SK-MEL-5 (cell line): ENCODE measurements at regions of chr1 and their contacts with region 1.

Region 1: GRCh38 chr1:32163405-32163804 is 16.1 kb upstream of the TXLNA start:
- DNase-seq: no peak

Region 2: DNA sequence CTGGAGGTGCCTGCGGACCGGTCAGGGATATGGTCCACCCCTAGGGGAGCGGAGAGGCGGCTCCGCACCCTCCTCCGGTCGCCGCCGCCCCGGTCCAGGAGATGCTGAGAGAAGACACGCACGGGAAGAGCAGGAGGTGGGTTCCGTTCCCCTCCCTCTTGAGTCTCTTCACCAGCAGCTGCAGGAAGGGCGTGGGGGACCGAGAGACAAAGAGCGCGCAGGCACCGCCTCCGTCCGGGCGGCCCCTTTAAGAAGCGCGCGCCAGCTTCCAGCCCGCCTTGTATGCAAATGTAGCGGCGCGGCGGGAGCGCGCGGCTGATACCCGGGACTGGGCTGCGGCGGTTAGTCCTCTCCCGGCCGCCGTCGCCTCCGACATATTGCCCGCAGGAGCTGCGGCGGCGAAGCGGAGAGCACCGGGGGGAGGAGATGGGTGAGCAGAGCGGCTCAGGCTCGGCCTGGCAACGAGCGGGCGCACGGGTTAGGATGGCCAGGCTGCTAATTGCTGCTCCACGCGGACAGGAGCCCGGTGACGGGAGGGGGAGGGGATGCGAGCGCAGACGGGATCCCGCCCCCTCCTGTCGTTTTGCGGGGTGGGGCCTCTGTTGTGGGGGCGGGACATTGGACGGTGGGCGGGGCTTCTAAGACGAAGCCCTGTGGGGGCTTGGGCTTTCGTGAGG is 90.6 kb before region 1 on chr1 and contains the start of gene TMEM39B:
- in situ Hi-C with region 1: no loop called
- DNase-seq: peak; percentile 91
- total RNA-seq, gene TMEM39B: 2.6 and 3.3 TPM in 2 replicates

Region 3: DNA sequence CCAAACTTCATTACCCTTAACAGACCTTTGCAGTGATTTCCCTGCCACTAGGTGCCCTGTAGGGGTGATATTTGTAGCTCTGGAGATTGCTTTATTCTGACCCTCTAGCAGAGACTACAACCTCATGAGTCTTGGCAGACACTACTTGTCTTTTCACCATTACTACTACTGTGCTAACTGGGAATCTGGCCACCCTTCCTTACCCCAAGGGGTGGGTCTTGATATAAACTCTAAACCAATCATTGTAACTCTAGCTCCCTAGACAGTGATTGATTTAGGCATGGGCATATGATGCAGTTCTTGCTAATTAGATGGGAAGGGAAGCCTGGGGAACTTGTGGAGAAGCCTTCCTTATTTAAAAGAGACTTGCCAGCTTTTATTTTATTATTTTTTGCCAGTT is 51.6 kb before region 1 on chr1:
- in situ Hi-C with region 1: loop called (anchors 10 kb)
- DNase-seq: peak; percentile 28